ENCODE measurements at regions of chr1 and their contacts with region 1.

Region 1: DNA sequence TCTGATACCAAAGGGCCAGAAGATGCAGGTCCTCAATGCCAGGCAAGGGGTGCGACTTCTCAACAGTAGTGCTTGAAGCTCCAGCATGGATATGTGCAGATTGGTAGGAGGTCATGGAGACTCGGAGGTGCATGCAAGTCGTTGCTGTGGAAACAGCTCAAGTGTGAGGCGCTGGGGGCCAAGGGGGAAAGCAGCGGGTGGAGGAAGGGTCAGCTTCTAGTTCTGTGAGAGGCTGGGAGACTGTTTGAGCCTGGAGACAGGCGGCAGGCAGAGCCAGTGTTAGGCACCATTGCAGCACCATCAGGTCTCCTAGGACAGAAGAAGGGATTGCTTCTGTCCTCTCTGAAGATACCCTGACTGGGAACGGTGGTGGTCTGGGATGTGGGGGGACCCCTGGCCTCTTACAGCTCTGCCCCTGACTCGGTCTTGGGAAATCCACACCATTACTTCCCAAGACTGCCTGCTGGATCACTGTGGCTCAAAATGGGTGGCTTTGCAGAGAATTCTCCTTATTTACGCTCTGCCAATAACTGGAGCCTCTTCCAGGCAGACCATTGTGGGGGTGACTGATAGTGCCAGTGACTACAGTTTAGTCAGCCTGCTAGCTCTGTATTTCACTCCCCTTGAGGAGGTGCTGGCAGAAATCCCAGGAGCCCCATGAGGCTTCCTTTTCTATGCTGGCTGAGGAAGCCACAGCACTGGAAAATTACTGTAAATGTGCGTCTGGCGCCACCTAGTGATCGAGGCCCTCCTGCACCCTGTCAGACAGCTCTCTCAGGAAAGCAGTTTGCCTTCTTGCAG is 46.3 kb upstream of the VANGL1 start:
- DNase-seq: peak; percentile 88

Region 2: GRCh38 chr1:115476616-115477015 is 118.9 kb before region 1 on chr1:
- intact Hi-C with region 1: loop called (anchors 5 kb)
- DNase-seq: no peak

Region 3: GRCh38 chr1:115545791-115546733 is 49.4 kb before region 1 on chr1:
- intact Hi-C with region 1: loop called (anchors 2 kb)
- DNase-seq: no peak

Measured in cardiac septum (tissue), 1 donor.